Panc1 (cell line): ENCODE measurements at regions of chr19 and their contacts with region 1.

Region 1: GRCh38 chr19:28878862-28879566 is 333.9 kb downstream of the UQCRFS1 start:
- DNase-seq: peak; percentile 33
- ATAC-seq: peak; percentile 89
- H3K4me3 ChIP-seq: no peak overlapping the region
- H3K27ac ChIP-seq: no peak overlapping the region
- H3K4me1 ChIP-seq: no peaks in the 10 kb centered on the region
- H3K27me3 ChIP-seq: no peaks in the 10 kb centered on the region
- CTCF ChIP-seq: peak; percentile 80

Region 2: GRCh38 chr19:28466107-28467045 is 412.6 kb before region 1 on chr19:
- CTCF ChIA-PET with region 1: no interaction called
- POLR2A ChIA-PET with region 1: no interaction called
- in situ Hi-C with region 1: no loop called
- intact Hi-C with region 1: loop called (anchors 5 kb)
- DNase-seq: peak; percentile 30
- ATAC-seq: no peak; the same call in 1 of the 2 replicates
- H3K4me3 ChIP-seq: no peak overlapping the region
- H3K27ac ChIP-seq: no peak overlapping the region
- H3K4me1 ChIP-seq: no peaks in the 10 kb centered on the region
- H3K27me3 ChIP-seq: no peaks in the 10 kb centered on the region; the same call in 1 of the 2 replicates
- CTCF ChIP-seq: peak; percentile 94

Region 3: DNA sequence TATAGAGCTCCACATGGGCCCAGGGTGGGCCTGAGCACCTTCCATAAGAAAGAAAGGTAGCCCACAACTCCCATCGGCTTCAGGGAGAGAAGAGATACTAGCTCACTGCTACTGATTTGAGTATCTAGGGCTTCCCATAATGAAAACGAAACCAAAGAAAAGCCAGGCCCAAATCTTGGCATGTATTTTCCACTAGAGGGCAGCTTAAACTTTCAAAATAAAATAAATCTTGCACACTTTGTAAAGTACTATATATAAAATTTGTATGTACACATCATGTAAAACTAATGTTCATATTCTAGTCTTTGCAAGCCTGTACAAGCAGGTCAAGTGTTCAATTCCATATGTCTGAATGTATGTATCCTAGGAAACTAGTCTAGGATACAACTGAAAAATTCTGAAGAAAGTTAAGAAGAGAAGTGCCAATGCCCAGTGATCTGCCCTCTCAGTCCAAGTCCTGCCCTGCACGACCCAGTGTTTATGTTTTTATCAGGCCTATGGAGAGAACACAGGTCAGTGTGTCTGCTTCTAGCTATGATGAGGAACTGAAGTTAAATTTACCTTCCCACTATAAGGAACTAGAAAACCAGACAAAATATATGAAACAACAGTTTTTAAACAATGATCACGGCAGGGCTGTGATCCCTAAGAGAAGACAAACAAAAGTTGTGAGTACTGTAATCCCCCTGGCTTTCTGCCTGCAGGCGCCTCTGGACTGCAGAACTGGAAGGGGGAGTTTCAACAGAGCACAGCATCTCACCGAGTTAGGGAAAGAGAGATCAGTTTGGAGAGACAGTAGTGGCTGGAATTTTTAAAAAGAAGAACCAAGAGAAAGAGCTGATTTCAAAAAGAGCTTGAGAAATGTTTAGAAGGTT is 141.8 kb before region 1 on chr19:
- CTCF ChIA-PET with region 1: interaction called, 26 read pairs
- POLR2A ChIA-PET with region 1: no interaction called
- in situ Hi-C with region 1: no loop called
- intact Hi-C with region 1: loop called (anchors 1 kb)
- DNase-seq: no peak
- ATAC-seq: peak; percentile 70
- H3K4me3 ChIP-seq: peak overlapping the region in 1 of 2 experiments; percentile 21; a peak in 1 of 4 replicates
- H3K27ac ChIP-seq: no peak overlapping the region
- H3K4me1 ChIP-seq: no peaks in the 10 kb centered on the region
- H3K27me3 ChIP-seq: no peaks in the 10 kb centered on the region
- CTCF ChIP-seq: peak; percentile 76

Region 4: DNA sequence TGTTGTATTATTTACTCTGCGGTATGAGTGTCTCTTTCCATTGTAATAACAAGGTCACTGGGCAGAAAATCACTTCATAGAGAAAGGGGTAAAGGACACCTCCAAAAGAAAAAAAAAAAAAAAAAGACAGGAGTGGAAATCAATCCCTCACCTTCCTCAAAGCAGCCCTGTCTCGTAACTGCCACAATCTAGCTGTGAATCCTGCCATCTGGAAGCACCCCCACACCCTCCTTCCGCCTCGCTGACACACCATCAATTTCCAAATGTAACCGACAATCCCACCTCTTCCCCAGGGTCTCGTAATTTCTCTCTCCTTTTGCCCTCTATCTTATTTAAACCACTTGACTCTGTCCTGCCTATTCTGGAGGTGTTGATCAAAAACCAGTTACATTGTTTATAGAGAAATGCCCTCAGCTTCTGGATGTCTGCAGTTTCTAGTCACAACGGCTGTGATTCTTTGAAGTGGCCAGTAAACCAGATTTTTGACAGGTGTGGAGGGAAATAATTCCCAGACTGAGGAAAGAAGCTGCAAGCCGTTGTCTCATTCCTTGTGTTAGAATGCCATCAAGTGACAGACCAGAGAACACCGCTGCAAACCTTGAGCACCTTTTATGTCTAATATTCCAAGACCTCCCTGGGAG is 718.0 kb after region 1 on chr19:
- CTCF ChIA-PET with region 1: no interaction called
- POLR2A ChIA-PET with region 1: no interaction called
- in situ Hi-C with region 1: no loop called
- intact Hi-C with region 1: loop called (anchors 5 kb)
- DNase-seq: peak; percentile 33
- ATAC-seq: peak; percentile 73; the same call in 1 of the 2 replicates
- H3K4me3 ChIP-seq: no peak overlapping the region
- H3K27ac ChIP-seq: no peak overlapping the region
- H3K4me1 ChIP-seq: no peaks in the 10 kb centered on the region
- H3K27me3 ChIP-seq: peaks cover 22% of the 10 kb centered on the region
- CTCF ChIP-seq: peak; percentile 75